ENCODE measurements at regions of chr20 and their contacts with region 1.

Region 1: DNA sequence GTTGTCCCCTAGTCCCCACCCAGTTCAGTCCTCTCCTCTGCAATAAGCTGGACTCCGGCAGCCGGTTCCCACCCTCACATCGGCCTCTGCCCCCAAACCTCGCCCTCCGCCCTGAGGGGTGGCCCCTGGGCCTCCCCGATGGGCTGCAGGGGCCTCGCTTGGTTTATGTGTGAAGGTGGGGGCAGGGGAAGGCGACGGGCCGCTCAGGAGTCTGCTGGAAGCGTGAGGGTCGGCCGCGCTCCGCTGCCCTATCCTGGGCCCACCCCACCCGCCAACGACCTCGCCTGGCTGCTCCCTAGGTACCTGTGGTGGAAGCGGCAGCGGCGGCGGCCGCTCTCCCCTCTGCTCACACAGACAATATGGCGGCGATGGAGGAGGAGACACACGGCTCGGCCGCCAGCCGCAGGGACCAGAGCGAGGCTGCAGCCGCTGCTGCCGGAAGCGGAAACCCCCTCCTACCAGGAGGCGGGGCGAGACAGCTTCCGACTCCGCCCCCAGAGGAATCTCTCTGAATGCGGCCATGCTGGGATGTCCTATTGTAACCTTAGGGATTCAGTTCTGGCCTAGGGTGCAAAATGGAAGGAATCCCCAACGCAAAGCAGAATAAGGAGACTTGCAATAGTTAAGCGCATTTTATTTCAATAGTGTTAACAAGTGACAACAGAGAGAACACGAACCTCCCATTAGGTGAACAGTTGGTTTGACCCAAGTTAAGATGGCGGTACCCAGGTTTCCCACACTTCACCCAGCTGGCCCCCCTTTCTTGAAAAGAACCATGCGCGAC is at the start of gene CSNK2A1:
- DNase-seq: peak; percentile 98
- total RNA-seq, gene CSNK2A1: 71.4 to 74.8 TPM

Region 2: DNA sequence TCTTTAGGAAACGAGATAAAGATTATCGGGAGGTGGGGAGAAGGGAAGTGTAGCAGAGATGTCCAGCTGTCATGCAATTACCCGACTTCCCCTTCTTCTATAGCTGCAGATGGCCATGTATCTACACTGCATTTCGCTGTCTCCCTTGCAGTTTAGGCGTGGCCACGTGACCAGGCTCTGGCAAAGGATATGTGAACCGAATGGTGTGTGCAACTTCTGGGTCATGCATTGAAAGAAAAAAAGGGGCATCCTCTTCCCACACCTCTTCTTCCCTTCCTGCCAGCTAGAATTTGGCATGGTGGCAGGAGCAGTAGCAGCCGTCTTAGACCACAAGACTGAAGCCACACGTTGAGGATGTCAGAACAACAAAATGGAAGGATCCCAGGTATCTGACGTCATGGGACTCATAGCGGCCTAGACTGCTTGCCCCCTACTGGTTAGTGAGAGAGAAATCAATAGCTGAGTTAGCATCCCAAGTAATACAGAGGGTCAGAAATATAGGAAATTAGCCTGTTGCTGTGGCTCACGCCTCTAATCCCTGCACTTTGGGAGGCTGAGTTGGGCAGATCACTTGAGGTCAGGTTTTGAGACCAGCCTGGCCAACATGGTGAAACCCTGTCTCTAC is 33.7 kb after region 1 on chr20:
- intact Hi-C with region 1: no loop called
- DNase-seq: peak; percentile 31

Region 3: DNA sequence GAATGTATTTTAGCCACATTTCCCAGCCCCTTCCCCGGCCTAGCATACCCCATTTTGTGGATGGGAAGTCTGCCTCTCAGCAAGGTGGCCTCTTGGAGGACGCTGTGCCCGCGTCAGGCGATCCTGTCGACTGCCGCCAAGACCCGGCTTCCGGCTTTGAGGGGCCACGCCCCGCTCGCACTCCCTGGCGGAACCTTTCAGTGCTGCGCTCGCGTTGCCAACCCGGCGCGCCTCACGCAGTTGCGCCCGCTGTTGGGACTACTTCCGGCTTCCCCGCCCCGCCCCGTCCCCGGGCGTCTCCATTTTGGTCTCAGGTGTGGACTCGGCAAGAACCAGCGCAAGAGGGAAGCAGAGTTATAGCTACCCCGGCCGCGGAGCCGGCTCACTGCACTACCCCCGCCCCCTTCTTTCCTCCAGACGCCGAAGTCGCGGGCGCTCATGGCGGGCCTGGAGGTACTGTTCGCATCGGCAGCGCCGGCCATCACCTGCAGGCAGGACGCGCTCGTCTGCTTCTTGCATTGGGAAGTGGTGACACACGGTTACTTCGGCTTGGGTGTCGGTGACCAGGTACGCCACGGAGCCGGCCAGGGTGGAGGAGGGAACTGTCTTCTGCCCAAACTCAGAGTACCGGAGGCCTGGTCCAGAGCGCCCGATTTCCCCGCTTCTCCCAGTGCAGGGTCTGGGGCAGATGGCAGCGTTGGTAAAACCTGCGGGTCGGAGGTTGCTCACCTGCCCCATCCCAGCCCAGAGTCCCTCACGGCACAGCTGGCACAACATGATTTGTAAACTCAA is 575.0 kb after region 1 on chr20 and contains the start of gene PSMF1:
- intact Hi-C with region 1: loop called in 1 of 2 experiments (anchors 10 kb)
- DNase-seq: peak; percentile 98
- total RNA-seq, gene PSMF1: 97.6 to 110 TPM